Activated naive CD4-positive, alpha-beta T cell treated with anti-CD3 and anti-CD28 coated beads, Interleukin-2, amount 10 ng/mL, durations not matched to agents 7 days and 5 days (primary cell): ENCODE measurements at regions of chr3 and their contacts with region 1.

Region 1: GRCh38 chr3:134473868-134474546 is 11.8 kb downstream of the ANAPC13 start:
- DNase-seq: peak; percentile 86
- H3K4me3 Mint-ChIP-seq: no peak overlapping the region
- H3K27ac Mint-ChIP-seq: no peak overlapping the region
- H3K4me1 Mint-ChIP-seq: no peaks in the 10 kb centered on the region
- H3K27me3 Mint-ChIP-seq: no peaks in the 10 kb centered on the region

Region 2: GRCh38 chr3:134197681-134198261 is 276.2 kb before region 1 on chr3:
- CTCF ChIA-PET with region 1: interaction called, 18 read pairs
- DNase-seq: no peak
- H3K4me3 Mint-ChIP-seq: no peak overlapping the region
- H3K27ac Mint-ChIP-seq: no peak overlapping the region
- H3K4me1 Mint-ChIP-seq: no peaks in the 10 kb centered on the region
- H3K27me3 Mint-ChIP-seq: no peaks in the 10 kb centered on the region

Region 3: DNA sequence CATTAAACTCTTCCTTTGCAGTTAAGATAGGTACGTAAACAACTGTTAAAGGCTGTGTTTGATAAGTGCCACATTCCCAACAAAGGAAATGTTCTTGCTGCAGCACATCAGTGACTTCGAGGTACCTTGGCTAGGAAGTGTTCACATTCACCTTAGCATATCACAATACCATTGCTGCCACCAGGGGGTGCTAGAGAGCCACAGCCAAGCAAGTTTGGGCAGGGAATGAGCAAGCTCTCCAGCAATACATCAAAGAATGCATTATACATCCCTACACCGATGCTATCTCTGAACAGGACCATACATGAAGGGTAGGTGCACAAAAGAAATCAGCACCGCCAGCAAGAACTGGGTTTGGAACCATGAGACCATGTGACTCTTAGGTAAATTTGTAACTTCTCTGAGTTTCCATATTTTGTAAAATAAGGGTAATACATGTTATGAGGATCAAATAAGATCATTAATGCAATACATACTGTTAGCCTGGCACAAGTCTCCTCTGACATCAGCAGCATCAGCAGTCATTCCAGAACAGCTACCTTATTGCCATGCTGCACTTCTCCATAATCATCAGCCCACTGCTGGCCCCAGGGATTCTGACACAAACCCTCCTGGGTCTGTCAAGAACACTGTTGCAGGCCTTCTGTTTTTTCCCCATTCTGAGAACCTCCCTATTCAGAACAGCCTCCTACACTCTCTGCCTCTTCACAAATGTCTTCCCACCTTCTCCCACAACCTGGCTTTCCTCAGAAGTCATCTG is 260.9 kb before region 1 on chr3:
- CTCF ChIA-PET with region 1: interaction called, 33 read pairs
- DNase-seq: peak; percentile 89
- H3K4me3 Mint-ChIP-seq: no peak overlapping the region
- H3K27ac Mint-ChIP-seq: no peak overlapping the region
- H3K4me1 Mint-ChIP-seq: peaks cover 9% of the 10 kb centered on the region
- H3K27me3 Mint-ChIP-seq: peaks cover 3% of the 10 kb centered on the region

Region 4: GRCh38 chr3:134302674-134303073 is 171.3 kb before region 1 on chr3:
- CTCF ChIA-PET with region 1: interaction called, 50 read pairs
- DNase-seq: no peak
- H3K4me3 Mint-ChIP-seq: no peak overlapping the region
- H3K27ac Mint-ChIP-seq: no peak overlapping the region
- H3K4me1 Mint-ChIP-seq: no peaks in the 10 kb centered on the region
- H3K27me3 Mint-ChIP-seq: peaks cover 71% of the 10 kb centered on the region

Region 5: GRCh38 chr3:134308350-134308891 is 165.6 kb before region 1 on chr3:
- CTCF ChIA-PET with region 1: interaction called, 50 read pairs
- DNase-seq: peak; percentile 82
- H3K4me3 Mint-ChIP-seq: no peak overlapping the region
- H3K27ac Mint-ChIP-seq: no peak overlapping the region
- H3K4me1 Mint-ChIP-seq: no peaks in the 10 kb centered on the region
- H3K27me3 Mint-ChIP-seq: peaks cover 85% of the 10 kb centered on the region

Region 6: DNA sequence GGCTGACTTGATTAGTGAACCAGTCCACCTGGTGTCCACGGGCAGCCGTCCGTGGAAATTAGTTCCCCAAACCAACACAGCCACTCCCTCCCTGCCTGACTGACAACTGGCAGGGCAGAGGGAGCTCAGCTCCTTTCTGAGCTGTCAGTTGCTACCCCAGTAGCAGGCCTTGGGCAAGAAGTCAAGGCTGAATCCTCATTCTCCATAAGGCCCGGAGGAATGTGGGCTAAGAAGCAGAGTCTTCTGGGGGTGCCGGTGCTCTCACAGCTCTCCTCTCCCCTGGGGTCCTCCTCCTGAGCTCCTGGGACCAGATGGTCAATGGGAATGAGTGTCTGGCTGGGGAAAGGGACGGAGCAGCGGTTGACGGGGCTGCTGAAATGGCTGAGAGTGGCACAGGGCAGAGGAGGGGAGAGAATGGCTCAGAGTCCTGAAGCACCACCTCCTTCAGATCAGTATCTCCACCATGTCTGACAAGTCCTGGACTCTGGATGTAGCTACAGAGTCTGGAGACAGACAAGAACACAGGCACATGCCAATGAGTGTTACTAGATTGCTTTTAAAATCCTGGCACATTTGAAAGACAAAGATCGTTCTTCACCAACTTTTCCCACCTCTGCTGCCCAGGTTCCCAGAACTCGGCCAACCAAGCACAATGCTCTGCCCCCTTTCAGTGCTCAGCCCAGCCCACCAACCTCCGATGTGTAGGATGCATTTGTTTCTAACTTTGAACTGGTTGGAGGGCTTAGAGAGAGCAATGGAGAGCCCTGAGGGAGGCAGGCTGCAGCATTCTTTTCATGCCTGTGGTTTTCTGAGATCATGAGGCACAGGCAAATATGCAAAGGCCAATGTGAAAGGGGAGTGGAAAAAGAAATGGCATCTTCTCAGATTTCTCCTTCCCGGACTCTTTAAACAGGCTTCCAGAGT is 116.5 kb before region 1 on chr3:
- CTCF ChIA-PET with region 1: interaction called, 10 read pairs
- DNase-seq: no peak
- H3K4me3 Mint-ChIP-seq: no peak overlapping the region
- H3K27ac Mint-ChIP-seq: no peak overlapping the region
- H3K4me1 Mint-ChIP-seq: no peaks in the 10 kb centered on the region
- H3K27me3 Mint-ChIP-seq: peaks cover 32% of the 10 kb centered on the region

Region 7: GRCh38 chr3:134485075-134485717 is 11.2 kb after region 1 on chr3:
- CTCF ChIA-PET with region 1: interaction called, 21 read pairs
- DNase-seq: peak; percentile 29
- H3K4me3 Mint-ChIP-seq: peak overlapping the region; percentile 92
- H3K27ac Mint-ChIP-seq: peak overlapping the region; percentile 98
- H3K4me1 Mint-ChIP-seq: peaks cover 49% of the 10 kb centered on the region
- H3K27me3 Mint-ChIP-seq: peaks cover 6% of the 10 kb centered on the region